ENCODE measurements at regions of chr5 and their contacts with region 1.

Region 1: GRCh38 chr5:89087551-89088318 is 204.8 kb upstream of the MEF2C start:
- DNase-seq: no peak
- H3K4me3 Mint-ChIP-seq: no peak overlapping the region
- H3K27ac Mint-ChIP-seq: no peak overlapping the region
- H3K4me1 Mint-ChIP-seq: no peaks in the 10 kb centered on the region
- H3K27me3 Mint-ChIP-seq: peaks cover 13% of the 10 kb centered on the region
- CTCF ChIP-seq: no peak

Region 2: GRCh38 chr5:88979244-88979643 is 108.5 kb before region 1 on chr5:
- CTCF ChIA-PET with region 1: no interaction called
- POLR2A ChIA-PET with region 1: no interaction called
- intact Hi-C with region 1: loop called (anchors 5 kb)
- DNase-seq: no peak
- H3K4me3 Mint-ChIP-seq: no peak overlapping the region
- H3K27ac Mint-ChIP-seq: no peak overlapping the region
- H3K4me1 Mint-ChIP-seq: no peaks in the 10 kb centered on the region
- H3K27me3 Mint-ChIP-seq: peaks cover 13% of the 10 kb centered on the region
- CTCF ChIP-seq: no peak

Region 3: GRCh38 chr5:89457411-89458331 is 369.9 kb after region 1 on chr5:
- CTCF ChIA-PET with region 1: no interaction called
- POLR2A ChIA-PET with region 1: no interaction called
- intact Hi-C with region 1: no loop called
- DNase-seq: peak; percentile 76
- H3K4me3 Mint-ChIP-seq: no peak overlapping the region
- H3K27ac Mint-ChIP-seq: peak overlapping the region; percentile 25
- H3K4me1 Mint-ChIP-seq: peaks cover 10% of the 10 kb centered on the region
- H3K27me3 Mint-ChIP-seq: no peaks in the 10 kb centered on the region
- CTCF ChIP-seq: no peak